ENCODE measurements at regions of chr4 and their contacts with region 1.

Region 1: DNA sequence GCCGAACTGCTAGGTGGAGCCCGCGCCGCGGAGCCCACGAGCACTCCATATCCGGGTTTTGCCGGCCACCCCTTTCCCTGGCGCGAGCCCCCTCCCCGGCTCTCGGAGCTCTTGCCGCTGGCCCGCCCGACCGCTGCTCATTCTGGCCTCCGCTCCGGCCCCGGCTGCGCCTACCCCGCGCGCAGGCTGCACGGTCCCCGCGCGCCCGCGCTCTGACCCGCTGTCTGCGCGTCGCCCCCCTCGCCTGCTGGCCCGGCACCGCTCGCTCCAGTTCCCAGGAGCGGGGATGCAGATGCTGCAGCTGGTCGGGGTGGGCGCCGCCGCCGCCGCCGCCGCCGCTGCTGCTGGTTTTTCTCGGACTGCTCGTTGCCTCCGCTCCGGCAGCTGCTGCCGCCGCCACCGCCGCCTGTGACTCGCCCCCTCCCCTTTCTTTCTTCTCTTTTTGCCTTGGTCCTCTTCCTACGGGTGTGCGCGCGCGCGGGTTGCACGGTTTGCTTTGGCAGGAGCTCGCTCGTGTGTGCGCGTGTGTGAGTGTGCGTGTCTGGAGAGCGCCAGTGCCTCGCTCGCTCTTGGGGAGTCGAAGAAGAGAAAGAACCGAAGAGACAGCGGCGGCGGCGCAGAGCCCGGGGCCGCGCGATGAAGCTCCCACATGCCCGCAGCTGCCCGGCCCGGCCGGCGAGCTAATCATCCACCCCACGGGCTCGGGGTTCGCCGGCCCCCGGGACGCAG is at the start of gene ADGRL3:
- DNase-seq: peak; percentile 50 to 96 (median 71)

Region 2: DNA sequence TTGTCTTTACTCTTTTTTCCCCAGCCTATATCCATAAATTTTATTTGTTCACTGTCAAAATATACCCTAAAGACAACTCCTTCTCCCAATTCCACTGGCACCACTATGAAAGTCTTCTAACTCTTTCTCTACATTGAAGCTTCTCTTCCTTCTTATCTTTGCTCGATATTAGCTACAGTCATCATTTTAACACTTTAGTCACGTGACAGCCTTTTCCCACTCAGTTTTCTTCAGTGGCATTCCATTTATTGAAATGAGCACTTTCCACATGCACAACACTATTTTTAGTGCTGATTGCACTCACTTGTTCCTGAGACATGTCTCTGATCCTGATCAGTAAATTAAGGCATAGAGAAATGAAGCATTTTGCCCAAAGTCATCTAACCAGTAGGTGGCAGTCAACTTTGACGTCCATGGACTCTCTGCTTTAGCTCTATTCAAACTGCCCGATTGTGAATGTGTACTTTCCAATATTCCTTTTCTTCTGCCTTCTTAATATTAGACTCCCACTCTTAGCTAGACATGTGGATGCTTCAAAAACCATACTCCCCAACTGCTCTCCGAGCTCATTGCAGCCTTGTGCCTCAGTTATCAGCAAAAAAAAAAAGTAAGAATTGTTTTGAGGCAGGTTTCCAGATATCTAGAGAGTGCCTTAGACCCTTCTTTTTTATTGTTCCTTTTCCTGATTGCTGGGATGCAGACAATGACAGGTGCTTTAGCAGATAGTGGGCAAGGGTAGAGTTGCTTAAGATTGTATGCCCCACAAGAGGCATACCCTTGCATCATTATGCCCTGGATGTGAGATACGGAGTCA is 394.6 kb before region 1 on chr4:
- intact Hi-C with region 1: no loop called
- DNase-seq: no peak

Region 3: GRCh38 chr4:61273233-61273632 is 72.9 kb after region 1 on chr4:
- intact Hi-C with region 1: loop called (anchors 10 kb)
- DNase-seq: peak in 1 of 10 donors; percentile 9

Region 4: DNA sequence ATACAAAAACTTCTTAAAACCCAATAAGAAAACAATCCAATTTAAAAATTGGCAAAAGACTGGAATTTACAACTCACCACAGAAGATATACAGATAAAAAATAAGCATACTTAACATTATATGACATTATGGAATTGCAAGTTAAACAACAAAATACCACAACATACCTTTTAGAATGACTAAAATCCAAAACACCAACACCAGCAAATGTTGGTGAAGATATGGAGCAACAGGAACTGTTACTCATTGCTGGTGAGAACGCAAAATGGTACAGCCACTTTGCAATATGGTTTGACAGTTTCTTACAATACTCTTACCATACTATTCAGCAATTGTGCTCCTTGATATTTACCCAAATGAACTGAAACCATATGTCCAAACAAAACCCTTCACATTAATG is 112.2 kb after region 1 on chr4:
- intact Hi-C with region 1: no loop called
- DNase-seq: no peak

Region 5: GRCh38 chr4:62028745-62029144 is 828.4 kb after region 1 on chr4:
- intact Hi-C with region 1: no loop called
- DNase-seq: no peak

Measured in posterior cingulate gyrus (tissue), 11 donors.